GM12878 (cell line): ENCODE measurements at regions of chr11 and their contacts with region 1.

Region 1: GRCh38 chr11:96459751-96460150 is 69.9 kb downstream of the JRKL start:
- DNase-seq: no peak
- ATAC-seq: no peak
- H3K4me3 ChIP-seq: no peak overlapping the region
- H3K27ac ChIP-seq: no peak overlapping the region
- H3K4me1 ChIP-seq: no peaks in the 10 kb centered on the region
- H3K27me3 ChIP-seq: peaks cover 0 to 3% of the 10 kb centered on the region in 2 experiments; a peak in 2 of 4 replicates
- CTCF ChIP-seq: no peak
- EP300 ChIP-seq: no peak
- POLR2A ChIP-seq: no peak
- RAD21 ChIP-seq: no peak

Region 2: DNA sequence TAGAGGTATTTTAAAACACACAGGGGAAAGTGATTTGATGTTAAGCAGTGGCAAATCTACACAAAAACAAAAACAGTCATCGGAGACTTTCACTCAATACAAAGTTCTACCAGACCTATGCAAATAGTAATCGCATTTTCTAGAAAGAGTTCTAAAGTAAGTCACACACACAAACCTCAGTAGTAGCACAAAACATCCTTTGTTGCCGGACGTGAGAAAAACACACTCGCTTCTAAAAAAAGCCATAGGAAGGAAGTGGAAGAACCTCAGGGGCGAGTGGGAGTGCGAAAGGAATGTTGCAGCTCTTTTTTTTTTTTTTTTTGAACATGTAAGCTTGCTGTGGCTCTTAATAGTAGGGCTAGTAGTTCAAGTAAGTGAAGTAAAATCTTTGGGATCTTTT is 205.7 kb before region 1 on chr11:
- CTCF ChIA-PET with region 1: no interaction called
- POLR2A ChIA-PET with region 1: no interaction called
- RAD21 ChIA-PET with region 1: no interaction called
- SMC1A ChIA-PET with region 1: no interaction called
- in situ Hi-C with region 1: no loop called
- intact Hi-C with region 1: no loop called
- DNase-seq: peak; percentile 91
- ATAC-seq: peak; percentile 58
- H3K4me3 ChIP-seq: peak overlapping the region; percentile 34
- H3K27ac ChIP-seq: peak overlapping the region; percentile 34
- H3K4me1 ChIP-seq: peaks cover 60% of the 10 kb centered on the region
- H3K27me3 ChIP-seq: no peaks in the 10 kb centered on the region
- CTCF ChIP-seq: no peak
- EP300 ChIP-seq: peak; percentile 19 to 62; a peak in 1 of 4 replicates
- POLR2A ChIP-seq: no peak
- RAD21 ChIP-seq: peak; percentile 23; the same call in 1 of the 2 replicates

Region 3: DNA sequence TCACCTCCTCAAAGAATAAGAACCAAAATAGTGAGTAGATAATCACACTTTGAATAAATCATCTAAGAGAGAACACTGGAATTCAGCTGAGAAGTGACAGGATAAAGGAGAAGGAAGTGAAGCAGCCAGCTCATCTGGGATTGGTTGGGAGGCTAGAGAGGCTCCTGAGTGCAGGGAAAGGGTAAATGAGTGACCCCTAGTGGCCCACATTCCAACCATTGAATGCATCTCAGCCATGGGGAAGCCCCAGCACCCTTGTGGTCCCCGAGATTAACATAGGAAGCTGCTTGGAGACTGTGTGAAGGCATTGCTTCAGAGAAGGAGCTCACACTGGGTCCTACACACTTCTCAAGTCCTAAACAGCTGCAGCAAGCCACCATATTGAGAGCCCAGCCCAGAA is 12.3 kb after region 1 on chr11:
- CTCF ChIA-PET with region 1: interaction called, 29 read pairs
- POLR2A ChIA-PET with region 1: no interaction called
- RAD21 ChIA-PET with region 1: interaction called, 11 read pairs
- SMC1A ChIA-PET with region 1: interaction called, 4 read pairs
- in situ Hi-C with region 1: no loop called
- intact Hi-C with region 1: no loop called
- DNase-seq: no peak
- ATAC-seq: peak; percentile 85
- H3K4me3 ChIP-seq: no peak overlapping the region
- H3K27ac ChIP-seq: no peak overlapping the region
- H3K4me1 ChIP-seq: no peaks in the 10 kb centered on the region
- H3K27me3 ChIP-seq: no peaks in the 10 kb centered on the region
- CTCF ChIP-seq: peak; percentile 21 to 34 (median 25); a peak in 3 of 6 replicates
- EP300 ChIP-seq: no peak
- POLR2A ChIP-seq: no peak
- RAD21 ChIP-seq: no peak